ENCODE measurements at regions of chr5 and their contacts with region 1.

Region 1: DNA sequence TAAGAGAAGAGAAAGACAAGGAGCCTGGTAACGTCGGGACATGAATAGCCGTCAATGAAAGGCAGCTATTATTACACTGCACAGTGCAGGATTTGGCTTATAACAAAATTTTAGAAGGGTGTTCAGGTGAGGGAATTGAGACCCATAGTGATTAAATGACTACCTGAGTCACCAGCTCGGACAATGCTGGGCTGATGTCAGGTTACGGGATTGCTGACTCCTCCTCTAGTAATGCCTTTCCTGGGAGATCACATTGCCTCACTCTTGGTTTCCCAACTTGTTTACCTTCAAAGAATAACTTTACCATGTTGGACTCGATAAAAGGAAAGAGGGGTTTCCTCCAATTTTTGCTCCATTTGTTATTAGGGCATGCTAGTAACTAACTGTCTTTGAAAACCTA is 132.6 kb downstream of the GHR start:
- DNase-seq: no peak
- H3K4me3 ChIP-seq: no peak overlapping the region
- H3K27ac ChIP-seq: no peak overlapping the region
- H3K4me1 ChIP-seq: peaks cover 41% of the 10 kb centered on the region
- H3K27me3 ChIP-seq: no peaks in the 10 kb centered on the region
- CTCF ChIP-seq: no peak

Region 2: DNA sequence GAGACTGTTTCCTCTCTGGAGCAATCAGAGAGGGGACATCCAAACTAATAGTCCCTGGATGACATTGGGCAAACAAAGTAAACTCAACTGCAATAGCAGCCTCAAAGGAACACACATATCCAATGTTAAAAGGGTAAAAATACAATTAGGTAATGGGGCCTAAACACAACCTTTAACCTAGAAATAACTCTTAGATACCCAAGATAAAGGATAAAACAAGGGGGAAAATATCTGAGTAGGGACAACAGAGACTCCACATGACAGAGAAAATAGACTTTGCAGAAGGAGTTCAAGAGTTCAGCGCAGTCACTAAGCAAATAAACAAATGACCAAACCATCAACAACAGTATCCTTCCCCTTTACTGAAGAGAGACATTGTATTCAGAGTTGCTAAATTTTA is 481.4 kb before region 1 on chr5:
- intact Hi-C with region 1: no loop called
- DNase-seq: no peak
- H3K4me3 ChIP-seq: no peak overlapping the region
- H3K27ac ChIP-seq: no peak overlapping the region
- H3K4me1 ChIP-seq: no peaks in the 10 kb centered on the region
- H3K27me3 ChIP-seq: peaks cover 11% of the 10 kb centered on the region
- CTCF ChIP-seq: no peak

Region 3: DNA sequence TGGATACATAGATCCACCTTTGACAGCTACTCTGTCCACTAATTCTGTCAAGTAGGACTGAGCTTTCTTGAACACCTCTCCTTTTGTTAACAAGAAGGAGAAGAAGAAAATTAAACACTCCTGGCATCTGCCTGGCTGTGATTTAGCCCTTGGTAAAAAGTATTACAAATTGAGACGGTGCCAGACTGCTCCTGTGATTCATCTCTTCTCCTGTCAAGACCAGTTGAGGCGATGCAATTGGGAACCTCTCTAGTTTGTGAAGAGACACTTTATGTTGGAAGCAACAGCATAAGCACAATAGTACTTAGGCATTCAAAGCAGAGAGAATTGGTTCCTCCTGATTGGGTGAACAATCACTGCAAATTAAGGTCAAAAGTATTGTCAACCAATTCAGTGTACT is 59.9 kb before region 1 on chr5:
- intact Hi-C with region 1: loop called (anchors 10 kb)
- DNase-seq: no peak
- H3K4me3 ChIP-seq: no peak overlapping the region
- H3K27ac ChIP-seq: no peak overlapping the region
- H3K4me1 ChIP-seq: peaks cover 76% of the 10 kb centered on the region
- H3K27me3 ChIP-seq: no peaks in the 10 kb centered on the region
- CTCF ChIP-seq: no peak

Measured in left ventricle myocardium inferior (tissue), 1 donor.